ENCODE measurements at regions of chr11 and their contacts with region 1.

Region 1: GRCh38 chr11:117107701-117108590 is 9.7 kb upstream of the SIK3 start:
- DNase-seq: no peak
- H3K4me3 Mint-ChIP-seq: no peak overlapping the region
- H3K27ac Mint-ChIP-seq: no peak overlapping the region
- H3K4me1 Mint-ChIP-seq: no peaks in the 10 kb centered on the region
- H3K27me3 Mint-ChIP-seq: no peaks in the 10 kb centered on the region

Region 2: GRCh38 chr11:116732271-116733042 is 375.5 kb before region 1 on chr11:
- intact Hi-C with region 1: loop called (anchors 2 kb)
- DNase-seq: peak; percentile 24
- H3K4me3 Mint-ChIP-seq: no peak overlapping the region
- H3K27ac Mint-ChIP-seq: peak overlapping the region; percentile 2
- H3K4me1 Mint-ChIP-seq: peaks cover 11% of the 10 kb centered on the region
- H3K27me3 Mint-ChIP-seq: no peaks in the 10 kb centered on the region

Region 3: GRCh38 chr11:116879800-116880625 is 227.9 kb before region 1 on chr11:
- intact Hi-C with region 1: loop called (anchors 1 kb)
- DNase-seq: no peak
- H3K4me3 Mint-ChIP-seq: no peak overlapping the region
- H3K27ac Mint-ChIP-seq: peak overlapping the region; percentile 6
- H3K4me1 Mint-ChIP-seq: peaks cover 13% of the 10 kb centered on the region
- H3K27me3 Mint-ChIP-seq: no peaks in the 10 kb centered on the region